ENCODE measurements at regions of chr6 and their contacts with region 1.

Region 1: DNA sequence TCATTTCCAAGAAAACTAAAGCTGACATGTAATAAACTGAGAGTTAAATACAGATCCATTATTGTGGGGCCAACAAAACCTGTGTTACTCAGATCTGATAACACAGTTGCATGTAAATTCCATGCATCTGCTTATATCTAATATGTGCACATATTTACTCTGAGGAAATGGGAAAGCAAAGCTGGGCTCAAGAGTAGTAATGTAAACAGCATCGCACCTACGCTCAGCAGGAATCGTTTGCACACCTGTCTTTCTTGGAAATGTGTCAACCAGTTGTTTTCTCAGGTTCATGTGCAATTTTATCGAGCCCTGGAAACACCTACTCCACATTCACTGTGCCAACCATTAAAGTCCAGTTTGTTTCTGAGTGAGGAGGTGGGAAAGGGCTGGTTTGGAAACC is 80.3 kb upstream of the CNKSR3 start:
- DNase-seq: no peak
- H3K4me3 ChIP-seq: no peak overlapping the region
- H3K4me3 Mint-ChIP-seq: no peak overlapping the region
- H3K27ac Mint-ChIP-seq: no peak overlapping the region
- H3K4me1 ChIP-seq: no peaks in the 10 kb centered on the region
- H3K4me1 Mint-ChIP-seq: peaks cover 7% of the 10 kb centered on the region
- H3K27me3 ChIP-seq: no peaks in the 10 kb centered on the region
- H3K27me3 Mint-ChIP-seq: no peaks in the 10 kb centered on the region
- CTCF ChIP-seq: no peak

Region 2: DNA sequence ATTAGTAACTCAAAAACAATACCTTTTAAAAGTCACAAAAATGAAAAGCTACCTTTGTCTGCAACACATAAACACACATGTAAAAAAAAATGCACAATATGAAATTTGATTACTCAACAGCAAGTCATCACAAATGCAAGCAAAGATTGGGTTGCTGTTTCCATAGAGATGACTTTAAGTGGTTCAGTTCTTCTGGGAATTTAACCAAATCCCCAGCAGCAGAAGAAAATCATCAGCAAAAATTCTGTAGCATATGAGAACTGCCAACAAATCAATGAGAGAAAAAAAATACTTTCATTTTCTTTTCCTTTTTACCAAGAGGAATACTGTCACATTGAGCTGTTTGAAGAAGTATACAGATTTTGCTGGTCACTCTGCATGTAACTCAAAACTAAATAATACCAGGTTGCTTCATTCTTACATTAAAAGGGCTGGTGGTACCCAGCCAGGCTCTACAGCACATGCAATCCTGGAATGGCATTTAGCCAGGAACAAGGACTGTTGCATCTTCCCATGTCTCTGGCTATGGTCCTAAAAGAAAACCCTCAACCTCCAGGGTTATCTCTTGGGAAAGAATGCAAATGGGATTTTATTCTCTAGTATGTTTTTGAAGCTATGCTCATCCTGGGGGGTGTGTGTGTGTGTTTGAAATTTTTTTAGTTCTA is 393.4 kb before region 1 on chr6:
- CTCF ChIA-PET with region 1: no interaction called
- POLR2A ChIA-PET with region 1: no interaction called
- intact Hi-C with region 1: no loop called
- DNase-seq: no peak
- H3K4me3 ChIP-seq: no peak overlapping the region
- H3K4me3 Mint-ChIP-seq: no peak overlapping the region
- H3K27ac Mint-ChIP-seq: no peak overlapping the region
- H3K4me1 ChIP-seq: no peaks in the 10 kb centered on the region
- H3K4me1 Mint-ChIP-seq: no peaks in the 10 kb centered on the region
- H3K27me3 ChIP-seq: no peaks in the 10 kb centered on the region
- H3K27me3 Mint-ChIP-seq: no peaks in the 10 kb centered on the region
- CTCF ChIP-seq: no peak

Region 3: GRCh38 chr6:154500769-154501577 is 89.8 kb before region 1 on chr6:
- CTCF ChIA-PET with region 1: no interaction called
- POLR2A ChIA-PET with region 1: no interaction called
- intact Hi-C with region 1: loop called (anchors 1 kb)
- DNase-seq: peak in 1 of 2 experiments; percentile 29
- H3K4me3 ChIP-seq: no peak overlapping the region
- H3K4me3 Mint-ChIP-seq: no peak overlapping the region
- H3K27ac Mint-ChIP-seq: no peak overlapping the region
- H3K4me1 ChIP-seq: no peaks in the 10 kb centered on the region
- H3K4me1 Mint-ChIP-seq: peaks cover 23% of the 10 kb centered on the region
- H3K27me3 ChIP-seq: no peaks in the 10 kb centered on the region
- H3K27me3 Mint-ChIP-seq: no peaks in the 10 kb centered on the region
- CTCF ChIP-seq: peak in 1 of 2 experiments; percentile 29

Measured in Caco-2 (cell line).